Natural killer cell (primary cell): ENCODE measurements at regions of chr4 and their contacts with region 1.

Region 1: DNA sequence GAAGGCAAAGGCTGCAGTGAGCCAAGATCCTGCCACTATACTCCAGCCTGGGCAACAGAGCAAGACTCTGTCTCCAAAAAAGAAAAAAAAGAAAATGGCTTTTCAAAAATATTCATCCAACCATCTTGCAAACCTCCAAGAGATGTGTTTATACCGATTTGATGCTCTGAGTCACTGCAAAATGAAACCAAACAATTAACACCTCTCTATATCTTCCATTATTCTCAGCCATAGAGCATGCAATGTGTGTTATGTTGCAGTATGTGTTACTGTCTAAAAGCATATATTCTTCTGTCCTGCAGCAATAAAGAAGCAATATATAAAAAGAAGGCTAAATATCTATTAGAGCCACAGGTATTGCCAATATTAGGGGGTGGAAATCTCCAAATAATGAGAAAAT is 51.4 kb downstream of the ARAP2 start:
- DNase-seq: peak in 1 of 2 donors; percentile 28
- ATAC-seq: peak; percentile 52 to 76 (median 73)
- H3K4me3 ChIP-seq: no peak overlapping the region
- H3K4me3 Mint-ChIP-seq: peak overlapping the region; percentile 76
- H3K27ac ChIP-seq: peak overlapping the region; percentile 61
- H3K27ac Mint-ChIP-seq: peak overlapping the region; percentile 79 to 81
- H3K4me1 ChIP-seq: peaks cover 29% of the 10 kb centered on the region
- H3K4me1 Mint-ChIP-seq: peaks cover 70 to 75% of the 10 kb centered on the region in 2 donors
- H3K27me3 ChIP-seq: no peaks in the 10 kb centered on the region
- H3K27me3 Mint-ChIP-seq: no peaks in the 10 kb centered on the region
- CTCF ChIP-seq: no peak

Region 2: GRCh38 chr4:36081185-36081584 is 111.7 kb before region 1 on chr4:
- intact Hi-C with region 1: no loop called
- DNase-seq: no peak
- ATAC-seq: no peak
- H3K4me3 ChIP-seq: no peak overlapping the region
- H3K4me3 Mint-ChIP-seq: no peak overlapping the region
- H3K27ac ChIP-seq: no peak overlapping the region
- H3K27ac Mint-ChIP-seq: no peak overlapping the region
- H3K4me1 ChIP-seq: no peaks in the 10 kb centered on the region
- H3K4me1 Mint-ChIP-seq: peaks cover 5 to 7% of the 10 kb centered on the region in 2 donors
- H3K27me3 ChIP-seq: no peaks in the 10 kb centered on the region
- H3K27me3 Mint-ChIP-seq: no peaks in the 10 kb centered on the region
- CTCF ChIP-seq: no peak

Region 3: GRCh38 chr4:36111172-36111571 is 81.8 kb before region 1 on chr4:
- intact Hi-C with region 1: no loop called
- DNase-seq: no peak
- ATAC-seq: no peak
- H3K4me3 ChIP-seq: no peak overlapping the region
- H3K4me3 Mint-ChIP-seq: no peak overlapping the region
- H3K27ac ChIP-seq: no peak overlapping the region
- H3K27ac Mint-ChIP-seq: peak overlapping the region; percentile 3 to 5
- H3K4me1 ChIP-seq: no peaks in the 10 kb centered on the region
- H3K4me1 Mint-ChIP-seq: peaks cover 18 to 19% of the 10 kb centered on the region in 2 donors
- H3K27me3 ChIP-seq: no peaks in the 10 kb centered on the region
- H3K27me3 Mint-ChIP-seq: no peaks in the 10 kb centered on the region
- CTCF ChIP-seq: no peak

Region 4: GRCh38 chr4:36230534-36230933 is 37.6 kb after region 1 on chr4:
- intact Hi-C with region 1: no loop called
- DNase-seq: no peak
- ATAC-seq: no peak
- H3K4me3 ChIP-seq: no peak overlapping the region
- H3K4me3 Mint-ChIP-seq: no peak overlapping the region
- H3K27ac ChIP-seq: no peak overlapping the region
- H3K27ac Mint-ChIP-seq: peak overlapping the region in 1 of 2 donors; percentile 41
- H3K4me1 ChIP-seq: peaks cover 27% of the 10 kb centered on the region
- H3K4me1 Mint-ChIP-seq: peaks cover 94 to 96% of the 10 kb centered on the region in 2 donors
- H3K27me3 ChIP-seq: no peaks in the 10 kb centered on the region
- H3K27me3 Mint-ChIP-seq: no peaks in the 10 kb centered on the region
- CTCF ChIP-seq: no peak

Region 5: GRCh38 chr4:36278789-36279188 is 85.9 kb after region 1 on chr4:
- intact Hi-C with region 1: loop called (anchors 2 kb)
- DNase-seq: peak in 1 of 2 donors; percentile 47
- ATAC-seq: peak; percentile 22 to 64 (median 50)
- H3K4me3 ChIP-seq: no peak overlapping the region
- H3K4me3 Mint-ChIP-seq: peak overlapping the region; percentile 71
- H3K27ac ChIP-seq: peak overlapping the region; percentile 24
- H3K27ac Mint-ChIP-seq: peak overlapping the region; percentile 98
- H3K4me1 ChIP-seq: peaks cover 10% of the 10 kb centered on the region
- H3K4me1 Mint-ChIP-seq: peaks cover 66 to 67% of the 10 kb centered on the region in 2 donors
- H3K27me3 ChIP-seq: no peaks in the 10 kb centered on the region
- H3K27me3 Mint-ChIP-seq: no peaks in the 10 kb centered on the region
- CTCF ChIP-seq: no peak

Region 6: GRCh38 chr4:36385951-36386571 is 193.1 kb after region 1 on chr4:
- intact Hi-C with region 1: loop called (anchors 2 kb)
- DNase-seq: peak; percentile 43 to 85
- ATAC-seq: peak; percentile 88 to 96 (median 91)
- H3K4me3 ChIP-seq: no peak overlapping the region
- H3K4me3 Mint-ChIP-seq: peak overlapping the region; percentile 38
- H3K27ac ChIP-seq: peak overlapping the region; percentile 24
- H3K27ac Mint-ChIP-seq: peak overlapping the region; percentile 47 to 73
- H3K4me1 ChIP-seq: peaks cover 10% of the 10 kb centered on the region
- H3K4me1 Mint-ChIP-seq: peaks cover 18 to 19% of the 10 kb centered on the region in 2 donors
- H3K27me3 ChIP-seq: peaks cover 33% of the 10 kb centered on the region
- H3K27me3 Mint-ChIP-seq: peaks cover 42 to 58% of the 10 kb centered on the region in 2 donors
- CTCF ChIP-seq: no peak